Activated naive CD4-positive, alpha-beta T cell treated with anti-CD3 and anti-CD28 coated beads, Interleukin-2, amount 10 ng/mL, durations not matched to agents 7 days and 5 days (primary cell): ENCODE measurements at regions of chr5 and their contacts with region 1.

Region 1: GRCh38 chr5:57137401-57137800 is 36.5 kb upstream of the GPBP1 start:
- DNase-seq: no peak
- H3K4me3 Mint-ChIP-seq: no peak overlapping the region
- H3K27ac Mint-ChIP-seq: no peak overlapping the region
- H3K4me1 Mint-ChIP-seq: no peaks in the 10 kb centered on the region
- H3K27me3 Mint-ChIP-seq: peaks cover 16% of the 10 kb centered on the region

Region 2: DNA sequence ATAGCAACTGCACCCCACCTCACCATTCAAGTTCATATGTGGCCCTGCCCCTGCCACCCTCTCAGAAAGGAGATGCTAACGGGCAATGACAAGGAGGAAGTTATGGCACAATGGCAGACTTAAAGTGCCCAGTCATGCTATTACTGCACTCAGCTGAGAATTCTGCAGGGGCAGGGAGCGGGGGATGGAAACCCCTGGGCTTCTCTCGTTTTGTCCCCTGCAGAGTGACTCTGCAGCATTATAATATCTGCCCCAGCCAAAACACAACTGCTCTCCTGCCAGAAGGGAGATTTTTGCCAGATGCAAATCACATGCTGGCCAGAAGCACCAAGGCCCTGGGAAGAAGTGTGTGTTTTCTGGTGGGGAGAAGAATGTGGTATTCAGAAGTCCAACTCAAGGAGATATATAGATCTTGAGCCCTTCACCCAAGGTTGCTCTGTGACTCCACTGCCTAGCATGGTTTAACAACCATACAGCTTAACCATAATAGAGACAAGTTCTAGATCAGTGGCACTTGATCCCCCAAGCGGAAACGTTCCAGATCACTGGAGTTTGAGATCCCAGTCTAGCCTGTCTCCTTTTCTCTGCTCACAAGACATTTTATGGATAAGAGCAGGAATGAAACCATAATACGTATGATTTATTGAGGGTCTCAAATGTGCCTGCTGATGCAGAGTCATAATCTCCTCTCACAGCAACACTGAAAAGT is 529.0 kb before region 1 on chr5:
- CTCF ChIA-PET with region 1: no interaction called
- DNase-seq: no peak
- H3K4me3 Mint-ChIP-seq: no peak overlapping the region
- H3K27ac Mint-ChIP-seq: no peak overlapping the region
- H3K4me1 Mint-ChIP-seq: peaks cover 88% of the 10 kb centered on the region
- H3K27me3 Mint-ChIP-seq: peaks cover 5% of the 10 kb centered on the region

Region 3: DNA sequence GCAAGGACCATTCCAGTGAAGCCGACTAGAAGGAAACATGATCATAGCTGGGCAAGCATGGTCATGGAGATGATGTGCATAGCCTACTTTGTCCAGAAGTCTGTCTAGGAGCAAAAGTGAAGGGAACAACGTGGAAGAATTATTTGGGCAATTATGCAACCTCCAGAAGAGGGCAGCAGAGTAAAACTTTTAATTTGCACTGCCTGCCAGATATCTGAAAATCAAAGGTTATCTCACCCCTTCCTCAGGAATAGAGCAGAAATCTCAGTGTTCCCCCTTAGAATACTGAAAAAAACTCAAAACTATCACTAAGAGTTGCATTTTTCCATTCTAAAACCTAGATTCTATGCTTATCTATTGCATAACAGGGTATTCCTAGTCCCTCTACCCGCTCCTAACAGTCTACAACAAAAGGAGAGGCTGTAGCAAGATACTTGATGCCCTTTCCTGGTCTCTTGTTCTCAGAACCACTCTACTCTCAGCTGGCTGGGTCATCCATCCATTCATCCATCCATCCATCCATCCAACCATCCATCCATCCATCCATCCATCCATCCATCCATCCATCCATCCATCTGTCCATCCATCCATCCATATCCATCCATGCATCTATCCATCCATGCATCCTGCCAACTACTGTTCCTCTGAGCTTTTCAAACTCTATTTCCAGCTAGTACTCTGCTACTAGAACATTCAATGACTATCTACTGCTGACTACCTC is 236.4 kb before region 1 on chr5:
- CTCF ChIA-PET with region 1: interaction called, 64 read pairs
- DNase-seq: peak; percentile 36
- H3K4me3 Mint-ChIP-seq: no peak overlapping the region
- H3K27ac Mint-ChIP-seq: no peak overlapping the region
- H3K4me1 Mint-ChIP-seq: no peaks in the 10 kb centered on the region
- H3K27me3 Mint-ChIP-seq: peaks cover 20% of the 10 kb centered on the region

Region 4: DNA sequence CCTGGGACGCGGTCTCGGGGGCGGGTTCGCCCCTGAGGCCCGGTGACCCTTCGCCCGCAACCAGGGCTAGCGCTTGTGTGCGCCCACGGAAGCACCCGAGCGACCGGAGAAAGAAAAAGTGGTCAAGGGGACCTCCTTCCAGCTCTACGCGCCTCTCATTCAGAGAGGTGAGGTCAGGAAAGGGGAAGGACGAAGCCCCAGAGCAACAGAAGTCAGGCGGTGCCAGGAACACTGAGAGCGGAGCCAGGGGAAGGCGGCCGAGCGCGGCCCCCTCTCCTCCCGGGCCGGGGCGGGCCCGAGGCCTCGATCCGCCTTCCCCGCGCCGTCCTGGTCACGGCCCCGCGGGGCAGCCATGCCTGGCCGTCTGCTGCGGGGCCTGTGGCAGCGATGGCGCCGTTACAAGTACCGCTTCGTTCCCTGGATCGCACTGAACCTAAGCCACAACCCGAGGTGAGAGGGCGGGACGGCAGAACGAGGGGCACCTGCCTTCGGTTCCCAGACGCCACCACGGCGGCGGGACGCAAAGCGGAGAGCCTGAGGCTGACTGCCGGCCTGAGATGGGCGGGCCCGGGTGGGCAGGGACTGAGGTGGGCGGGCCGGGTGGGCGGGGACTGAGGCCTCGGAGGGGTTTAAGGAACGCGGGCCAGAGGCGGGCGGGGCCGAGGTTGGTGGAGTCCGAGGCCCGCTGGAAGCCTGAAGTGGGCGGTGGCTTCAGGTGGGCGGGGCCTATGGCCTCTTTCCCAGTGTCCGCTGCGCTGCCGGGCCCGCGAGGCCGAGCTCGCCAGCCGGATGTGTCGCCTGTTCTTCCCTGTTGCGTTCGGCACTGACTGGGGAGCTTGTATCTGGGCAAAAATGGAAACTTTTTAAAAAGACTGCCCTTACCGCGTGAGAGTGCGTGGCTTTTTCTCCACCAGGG is 227.8 kb before region 1 on chr5 and contains the start of gene SETD9:
- CTCF ChIA-PET with region 1: interaction called, 24 read pairs
- DNase-seq: peak; percentile 94
- H3K4me3 Mint-ChIP-seq: peak within 1 kb of the TSS; percentile 75
- H3K27ac Mint-ChIP-seq: peak within 1 kb of the TSS; percentile 88
- H3K4me1 Mint-ChIP-seq: peaks cover 24% of the 10 kb centered on the region
- H3K27me3 Mint-ChIP-seq: peaks cover 29% of the 10 kb centered on the region

Region 5: DNA sequence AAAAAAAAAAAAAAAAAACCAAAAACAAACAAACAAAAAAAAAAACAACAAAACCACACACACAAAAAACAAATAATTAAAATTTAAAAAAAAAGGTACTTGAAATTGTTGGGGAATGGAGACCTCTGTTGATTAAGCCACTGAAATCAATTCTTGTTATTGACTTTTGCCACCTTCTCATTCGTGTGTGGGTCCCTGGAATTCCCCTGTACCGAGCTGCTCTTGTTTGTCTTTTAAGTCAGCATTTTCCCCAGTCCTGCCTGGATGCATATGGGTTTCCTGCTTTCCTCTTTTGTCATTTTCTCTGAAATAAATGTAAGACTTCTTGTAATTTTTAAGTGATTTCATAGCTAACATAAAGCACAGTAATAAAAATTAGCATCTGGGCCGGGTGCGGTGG is 82.0 kb after region 1 on chr5:
- CTCF ChIA-PET with region 1: interaction called, 16 read pairs
- DNase-seq: no peak
- H3K4me3 Mint-ChIP-seq: no peak overlapping the region
- H3K27ac Mint-ChIP-seq: no peak overlapping the region
- H3K4me1 Mint-ChIP-seq: peaks cover 34% of the 10 kb centered on the region
- H3K27me3 Mint-ChIP-seq: no peaks in the 10 kb centered on the region